Motor neuron (in vitro differentiated cells): ENCODE measurements at regions of chr16 and their contacts with region 1.

Region 1: DNA sequence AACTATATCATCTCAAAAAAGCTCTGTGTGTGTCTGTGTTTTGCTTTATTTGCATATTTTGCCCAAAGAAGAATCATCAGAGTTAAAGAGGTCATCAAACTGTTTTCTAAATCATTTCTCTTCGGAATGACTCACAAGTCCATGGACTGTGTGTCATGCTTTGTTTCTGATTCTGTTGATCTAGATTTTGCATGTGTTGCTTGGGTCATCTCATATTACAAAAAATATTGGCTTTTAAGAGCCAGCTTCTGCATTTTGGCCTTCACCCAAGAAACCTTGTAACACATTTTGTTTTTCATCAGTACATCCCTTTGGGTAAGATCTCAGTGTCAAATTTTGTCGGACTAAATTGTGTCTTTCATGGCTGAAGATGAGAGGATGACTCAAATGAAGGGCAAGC is 471.1 kb upstream of the HSBP1 start:
- ATAC-seq: peak in 5 of 8 experiments; percentile 25 to 98 (median 68)
- H3K4me3 ChIP-seq: no peak overlapping the region
- H3K27ac ChIP-seq: no peak overlapping the region
- H3K4me1 ChIP-seq: peaks cover 0 to 9% of the 10 kb centered on the region in 2 donors

Region 2: DNA sequence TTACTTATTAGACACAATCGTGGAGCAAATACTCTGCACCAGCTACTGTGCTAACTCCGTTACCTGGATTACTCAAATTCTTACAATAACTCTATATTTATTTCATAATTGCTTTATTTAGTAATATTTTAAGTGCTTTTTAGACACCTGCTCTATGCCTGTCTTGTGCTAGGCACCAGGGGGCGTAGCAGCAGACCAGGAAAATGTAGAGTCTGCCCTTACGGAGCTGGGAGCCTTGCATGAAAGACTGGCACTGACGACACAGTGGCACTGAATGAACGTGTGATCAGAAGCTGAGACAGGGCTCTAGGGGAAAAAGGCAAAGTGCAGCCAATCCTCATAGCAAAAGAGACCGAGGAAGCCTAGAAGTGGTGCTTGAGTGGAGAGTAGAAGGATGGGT is 223.3 kb before region 1 on chr16:
- in situ Hi-C with region 1: loop called in 1 of 9 experiments (anchors 25 kb)
- ATAC-seq: peak in 6 of 8 experiments; percentile 37 to 85 (median 66)
- H3K4me3 ChIP-seq: no peak overlapping the region
- H3K27ac ChIP-seq: no peak overlapping the region
- H3K4me1 ChIP-seq: no peaks in the 10 kb centered on the region